PC-3 (cell line): ENCODE measurements at regions of chr10 and their contacts with region 1.

Region 1: GRCh38 chr10:51699475-51700227 is at the start of gene CSTF2T:
- DNase-seq: peak; percentile 99
- ATAC-seq: peak; percentile 91
- H3K4me3 ChIP-seq: peak within 1 kb of the TSS; percentile 74
- H3K27ac ChIP-seq: peak within 1 kb of the TSS; percentile 78
- H3K4me1 ChIP-seq: peaks cover 32% of the 10 kb centered on the region
- H3K27me3 ChIP-seq: no peaks in the 10 kb centered on the region
- CTCF ChIP-seq: no peak
- total RNA-seq, gene CSTF2T: 41.7 and 45.2 TPM in 2 replicates

Region 2: GRCh38 chr10:51422311-51423120 is 277.1 kb before region 1 on chr10:
- CTCF ChIA-PET with region 1: no interaction called
- POLR2A ChIA-PET with region 1: no interaction called
- intact Hi-C with region 1: loop called (anchors 10 kb)
- DNase-seq: peak; percentile 95
- ATAC-seq: peak; percentile 95
- H3K4me3 ChIP-seq: no peak overlapping the region
- H3K27ac ChIP-seq: no peak overlapping the region
- H3K4me1 ChIP-seq: no peaks in the 10 kb centered on the region; the same call in 1 of the 2 replicates
- H3K27me3 ChIP-seq: no peaks in the 10 kb centered on the region
- CTCF ChIP-seq: peak; percentile 100

Region 3: GRCh38 chr10:51640120-51640819 is 59.4 kb before region 1 on chr10:
- CTCF ChIA-PET with region 1: no interaction called
- POLR2A ChIA-PET with region 1: interaction called, 8 read pairs
- intact Hi-C with region 1: loop called (anchors 2 kb)
- DNase-seq: no peak
- ATAC-seq: no peak
- H3K4me3 ChIP-seq: no peak overlapping the region
- H3K27ac ChIP-seq: no peak overlapping the region
- H3K4me1 ChIP-seq: peaks cover 24% of the 10 kb centered on the region
- H3K27me3 ChIP-seq: no peaks in the 10 kb centered on the region
- CTCF ChIP-seq: no peak

Region 4: DNA sequence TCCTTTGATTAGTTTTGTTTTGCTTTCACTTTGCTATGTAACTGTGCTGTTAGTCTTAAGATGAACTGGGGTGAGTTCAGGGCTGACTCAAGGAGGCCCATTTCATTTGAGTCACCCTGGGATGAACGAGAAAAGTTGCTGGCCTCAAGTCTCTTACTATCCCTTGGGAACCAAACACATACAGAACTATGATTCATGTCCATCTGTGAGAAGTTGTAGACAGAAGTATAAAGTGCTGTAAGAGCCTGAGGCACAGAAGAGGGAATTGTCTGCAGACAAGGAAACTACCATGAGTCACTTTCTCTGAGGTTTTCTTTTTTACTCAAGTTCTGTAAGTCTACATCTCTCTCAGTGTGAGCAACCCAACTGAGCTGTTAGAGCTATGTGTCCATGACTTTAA is 179.6 kb after region 1 on chr10:
- CTCF ChIA-PET with region 1: no interaction called
- POLR2A ChIA-PET with region 1: no interaction called
- intact Hi-C with region 1: loop called (anchors 5 kb)
- DNase-seq: peak; percentile 99
- ATAC-seq: peak; percentile 99
- H3K4me3 ChIP-seq: no peak overlapping the region
- H3K27ac ChIP-seq: peak overlapping the region; percentile 82
- H3K4me1 ChIP-seq: peaks cover 12% of the 10 kb centered on the region
- H3K27me3 ChIP-seq: no peaks in the 10 kb centered on the region
- CTCF ChIP-seq: no peak

Region 5: DNA sequence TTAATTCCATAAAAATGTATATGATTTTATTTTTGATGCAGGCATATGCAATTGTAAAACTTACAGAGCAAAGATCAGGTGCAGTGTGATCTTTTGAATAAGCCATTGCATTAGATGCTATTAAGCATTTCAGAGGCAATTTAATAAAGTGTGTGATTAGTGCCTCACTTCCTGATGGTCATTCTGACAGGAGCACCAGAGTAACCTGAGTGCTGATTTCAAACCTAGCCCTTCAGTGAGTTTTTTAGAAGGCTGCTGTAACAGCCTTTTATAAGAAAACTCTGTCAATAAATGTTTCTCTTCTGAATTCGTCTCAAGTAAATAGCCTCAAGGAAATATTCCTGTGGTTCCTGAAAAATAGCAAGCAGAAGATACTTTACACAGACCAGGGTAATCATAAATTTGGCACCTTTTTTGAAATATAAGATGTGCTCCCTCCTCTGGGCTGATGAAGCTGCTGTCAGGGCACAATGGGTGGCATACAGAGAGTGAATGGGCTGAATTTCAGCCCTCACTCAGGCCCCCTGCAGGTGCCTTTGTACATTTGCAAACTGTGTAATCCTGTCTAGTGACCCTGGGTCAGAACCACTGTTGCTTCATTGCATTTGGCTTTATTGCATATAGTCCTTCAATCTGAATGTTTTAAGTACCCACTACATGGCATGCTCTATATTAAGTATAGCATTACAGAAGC is 193.5 kb after region 1 on chr10:
- CTCF ChIA-PET with region 1: no interaction called
- POLR2A ChIA-PET with region 1: no interaction called
- intact Hi-C with region 1: loop called (anchors 1 kb)
- DNase-seq: peak; percentile 85
- ATAC-seq: peak; percentile 93
- H3K4me3 ChIP-seq: no peak overlapping the region
- H3K27ac ChIP-seq: no peak overlapping the region
- H3K4me1 ChIP-seq: no peaks in the 10 kb centered on the region
- H3K27me3 ChIP-seq: no peaks in the 10 kb centered on the region
- CTCF ChIP-seq: peak; percentile 98